ENCODE measurements at regions of chr6 and their contacts with region 1.

Region 1: DNA sequence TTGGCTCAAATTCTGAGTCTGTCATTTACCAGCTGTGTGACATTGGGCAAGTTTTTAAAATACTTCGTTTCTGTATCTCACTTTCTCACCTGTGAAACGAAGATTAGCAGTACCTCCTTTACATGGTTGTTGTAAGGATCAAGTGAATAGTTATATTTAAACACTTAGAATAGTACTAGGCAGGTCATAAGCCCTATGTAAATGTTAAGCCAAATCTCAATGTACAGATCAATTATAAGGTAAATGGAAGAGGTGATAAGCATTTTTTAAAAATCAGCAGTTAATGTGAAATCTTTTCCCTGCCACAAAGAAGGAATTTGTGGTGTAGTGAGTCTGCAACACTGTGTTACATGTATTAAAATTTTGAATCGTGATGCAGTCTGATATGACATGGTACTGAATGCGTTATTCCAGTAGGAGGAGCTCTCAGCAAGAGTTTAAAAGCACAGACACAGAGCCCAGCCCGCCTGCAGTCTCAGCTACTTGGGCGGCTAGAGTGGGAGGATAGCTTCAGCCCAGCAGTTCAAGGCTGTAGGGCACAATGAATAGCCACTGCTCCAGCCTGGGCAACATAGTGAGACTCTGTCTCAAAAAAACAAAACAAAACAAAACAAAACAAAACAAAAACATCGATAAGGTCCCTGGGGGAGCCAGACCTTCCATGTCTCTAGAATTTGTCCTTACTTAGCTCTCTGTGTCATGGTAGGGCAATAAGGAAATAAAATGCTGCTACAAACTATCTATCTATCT is 46.0 kb downstream of the GTF2H5 start:
- DNase-seq: peak; percentile 18 to 62 (median 49)
- ATAC-seq: peak; percentile 96
- H3K4me3 ChIP-seq: no peak overlapping the region
- H3K4me3 Mint-ChIP-seq: no peak overlapping the region
- H3K27ac ChIP-seq: no peak overlapping the region
- H3K27ac Mint-ChIP-seq: no peak overlapping the region
- H3K4me1 ChIP-seq: no peaks in the 10 kb centered on the region
- H3K4me1 Mint-ChIP-seq: peaks cover under 1 to 16% (median 2%) of the 10 kb centered on the region in 7 donors
- H3K27me3 ChIP-seq: no peaks in the 10 kb centered on the region
- H3K27me3 Mint-ChIP-seq: peaks cover 0 to 2% (median 0%) of the 10 kb centered on the region in 5 donors

Region 2: GRCh38 chr6:158595223-158595622 is 381.1 kb after region 1 on chr6:
- CTCF ChIA-PET with region 1: interaction called, 10 read pairs
- POLR2A ChIA-PET with region 1: no interaction called
- intact Hi-C with region 1: loop called in 1 of 2 experiments (anchors 1 kb)
- DNase-seq: peak in 5 of 9 donors; percentile 7 to 32 (median 21)
- ATAC-seq: peak; percentile 66
- H3K4me3 ChIP-seq: no peak overlapping the region
- H3K4me3 Mint-ChIP-seq: no peak overlapping the region
- H3K27ac ChIP-seq: no peak overlapping the region
- H3K27ac Mint-ChIP-seq: peak overlapping the region in 1 of 9 donors; percentile 1
- H3K4me1 ChIP-seq: no peaks in the 10 kb centered on the region
- H3K4me1 Mint-ChIP-seq: peaks cover 0 to 18% (median 4%) of the 10 kb centered on the region in 7 donors
- H3K27me3 ChIP-seq: no peaks in the 10 kb centered on the region
- H3K27me3 Mint-ChIP-seq: no peaks in the 10 kb centered on the region

Region 3: DNA sequence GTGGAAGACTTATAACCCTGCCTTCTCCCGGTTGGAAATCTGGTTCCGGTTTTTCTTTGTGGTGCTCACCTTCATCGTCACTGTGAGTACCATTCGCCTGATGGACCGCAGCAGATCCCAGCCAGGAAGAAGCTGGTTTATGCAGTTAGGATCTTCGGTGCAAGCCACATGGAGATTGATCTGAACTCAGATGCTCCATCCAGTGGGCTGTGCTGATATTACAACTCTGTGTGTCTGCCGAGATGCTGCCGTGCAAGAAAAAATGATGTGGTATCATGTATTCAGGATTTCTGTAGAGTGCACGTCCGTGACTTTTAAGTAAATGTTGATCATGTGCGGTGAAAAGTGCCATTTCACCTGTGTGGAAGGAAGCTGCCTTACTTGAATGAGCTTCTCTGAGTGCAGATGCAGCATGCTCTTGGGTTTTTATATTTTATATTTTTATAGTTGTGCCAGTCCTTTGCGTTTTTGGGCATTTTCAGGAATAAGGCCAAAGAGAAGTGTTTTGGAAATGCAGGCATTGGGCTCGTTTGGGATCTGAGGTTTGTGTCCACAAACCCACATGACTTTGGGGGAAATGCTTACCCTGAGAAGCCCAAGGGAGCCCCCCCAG is 391.3 kb after region 1 on chr6:
- CTCF ChIA-PET with region 1: interaction called, 8 read pairs
- POLR2A ChIA-PET with region 1: no interaction called
- intact Hi-C with region 1: loop called (anchors 1 kb)
- DNase-seq: peak in 8 of 9 donors; percentile 31 to 57 (median 44)
- ATAC-seq: peak; percentile 85
- H3K4me3 ChIP-seq: no peak overlapping the region
- H3K4me3 Mint-ChIP-seq: no peak overlapping the region
- H3K27ac ChIP-seq: no peak overlapping the region
- H3K27ac Mint-ChIP-seq: peak overlapping the region in 8 of 9 donors; percentile 5 to 83 (median 66)
- H3K4me1 ChIP-seq: no peaks in the 10 kb centered on the region
- H3K4me1 Mint-ChIP-seq: peaks cover 0 to 19% (median 7%) of the 10 kb centered on the region in 7 donors
- H3K27me3 ChIP-seq: no peaks in the 10 kb centered on the region
- H3K27me3 Mint-ChIP-seq: no peaks in the 10 kb centered on the region

Measured in naive thymus-derived CD4-positive, alpha-beta T cell (primary cell).